ENCODE measurements at regions of chr3 and their contacts with region 1.

Region 1: DNA sequence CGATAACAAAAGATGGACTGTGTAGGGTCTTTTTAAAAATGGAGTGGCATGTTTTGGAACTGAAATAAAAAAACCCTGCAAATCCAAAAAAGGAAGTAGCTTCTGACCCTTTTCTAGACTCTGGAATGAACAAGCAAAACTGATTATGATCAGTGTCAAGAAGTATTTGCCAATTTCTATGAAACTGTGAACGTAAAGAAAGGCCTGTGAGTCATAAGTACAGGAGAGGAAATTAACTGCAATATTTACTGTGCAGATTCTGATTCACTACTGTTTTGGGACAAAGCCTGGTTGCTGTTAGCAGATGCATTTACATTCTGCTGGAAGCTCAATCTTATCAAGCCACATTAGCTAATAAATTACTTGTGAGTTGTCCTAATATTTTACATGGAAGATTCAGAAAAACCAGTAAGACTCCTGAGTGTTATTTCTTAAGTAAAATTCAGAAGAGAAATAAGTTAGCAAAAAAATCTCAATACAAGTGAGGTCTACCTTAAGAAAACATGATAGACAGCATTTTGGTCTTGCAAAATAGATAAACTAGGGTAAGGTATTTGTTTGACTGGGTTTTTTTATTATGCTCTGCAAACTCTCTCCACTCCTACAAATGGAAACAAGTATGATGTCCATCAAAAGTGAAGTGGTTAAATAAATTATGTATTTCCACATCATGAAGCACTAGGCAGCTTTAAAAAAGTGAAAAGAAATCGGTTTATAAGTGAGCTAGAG is 90.2 kb upstream of the LMOD3 start:
- DNase-seq: peak; percentile 94
- H3K4me3 ChIP-seq: no peak overlapping the region
- H3K27ac ChIP-seq: peak overlapping the region; percentile 68
- H3K4me1 ChIP-seq: peaks cover 39% of the 10 kb centered on the region
- H3K27me3 ChIP-seq: no peaks in the 10 kb centered on the region
- CTCF ChIP-seq: no peak
- POLR2A ChIP-seq: no peak

Region 2: DNA sequence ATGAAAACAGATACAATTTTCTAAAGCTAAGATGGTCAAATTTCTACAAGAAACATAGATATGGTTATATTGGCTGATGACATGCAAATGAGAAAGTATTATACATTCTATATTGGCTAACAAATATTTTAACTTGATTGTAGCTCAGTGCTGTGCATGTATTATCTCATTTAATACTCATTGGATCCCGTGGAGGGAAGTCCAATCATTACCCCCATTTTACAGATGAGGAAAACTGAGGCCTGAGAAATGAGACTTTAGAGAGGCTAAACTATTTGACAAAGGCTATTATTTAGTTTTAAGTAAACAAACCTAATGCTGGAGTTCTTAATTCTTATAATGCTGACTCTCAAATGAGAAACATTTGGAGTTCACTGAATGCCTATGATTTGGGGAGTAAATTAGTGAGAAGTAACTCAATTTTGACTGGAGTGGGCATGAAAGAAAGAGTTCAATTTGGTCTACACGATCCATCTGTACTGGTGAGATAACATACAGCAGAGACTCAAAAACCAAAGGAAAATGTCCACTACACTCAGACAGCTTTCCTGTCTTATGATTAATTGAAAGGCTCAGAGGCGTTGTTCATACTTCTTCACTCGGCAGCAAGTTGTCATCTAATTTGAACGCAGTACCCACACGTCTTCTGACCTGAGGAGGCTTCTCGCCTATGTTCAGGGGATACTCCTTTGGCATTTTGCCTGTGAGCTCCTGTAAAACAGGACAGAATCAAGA is 18.0 kb before region 1 on chr3:
- CTCF ChIA-PET with region 1: interaction called, 20 read pairs
- POLR2A ChIA-PET with region 1: interaction called, 3 read pairs
- dilution Hi-C with region 1: no loop called
- intact Hi-C with region 1: loop called (anchors 2 kb)
- DNase-seq: peak; percentile 79
- H3K4me3 ChIP-seq: no peak overlapping the region
- H3K27ac ChIP-seq: peak overlapping the region; percentile 32
- H3K4me1 ChIP-seq: peaks cover 37% of the 10 kb centered on the region
- H3K27me3 ChIP-seq: no peaks in the 10 kb centered on the region
- CTCF ChIP-seq: no peak
- POLR2A ChIP-seq: no peak

Region 3: GRCh38 chr3:69200384-69201068 is 12.0 kb before region 1 on chr3:
- CTCF ChIA-PET with region 1: interaction called, 20 read pairs
- POLR2A ChIA-PET with region 1: interaction called, 3 read pairs
- dilution Hi-C with region 1: no loop called
- intact Hi-C with region 1: loop called (anchors 2 kb)
- DNase-seq: peak; percentile 94
- H3K4me3 ChIP-seq: peak overlapping the region in 2 of 3 experiments; percentile 48 to 88
- H3K27ac ChIP-seq: peak overlapping the region; percentile 88
- H3K4me1 ChIP-seq: peaks cover 56% of the 10 kb centered on the region
- H3K27me3 ChIP-seq: no peaks in the 10 kb centered on the region
- CTCF ChIP-seq: no peak
- POLR2A ChIP-seq: no peak

Region 4: DNA sequence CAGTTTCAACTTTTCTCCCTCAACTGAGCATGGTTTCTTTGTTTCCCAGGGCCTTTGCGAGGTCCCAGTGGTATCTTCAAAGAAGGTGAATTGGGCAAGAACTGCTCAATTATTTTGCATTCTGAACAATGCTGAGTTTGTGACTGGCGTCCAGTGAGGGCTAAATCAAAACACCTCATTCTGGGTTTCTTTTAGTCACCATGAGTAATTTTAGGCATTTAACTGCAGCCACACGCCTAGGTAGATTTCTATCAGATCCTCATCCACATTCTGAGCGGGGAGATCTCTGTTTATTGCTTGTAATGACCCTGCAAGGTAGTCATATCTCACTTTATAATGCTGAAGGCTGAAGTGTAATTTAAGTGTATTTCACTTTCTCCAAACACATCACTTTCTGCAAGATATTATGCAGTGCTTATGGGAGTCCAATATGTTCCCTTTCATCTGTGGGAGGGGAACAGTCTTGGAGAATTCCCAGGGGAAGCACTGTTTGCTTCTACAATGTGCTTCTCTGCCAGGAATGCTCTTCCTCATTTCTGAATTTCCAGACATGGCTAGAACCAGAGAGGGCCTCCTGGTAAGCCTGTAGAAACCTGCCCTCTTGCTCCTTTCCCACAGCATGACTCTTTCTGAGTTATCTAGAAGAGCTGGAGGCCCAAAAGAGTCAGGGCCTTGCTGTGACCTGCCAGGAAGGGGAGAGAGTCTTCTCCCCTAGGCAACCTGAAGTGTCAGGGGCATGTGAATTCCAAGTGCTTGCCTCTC is 81.6 kb after region 1 on chr3:
- CTCF ChIA-PET with region 1: interaction called, 3 read pairs
- POLR2A ChIA-PET with region 1: no interaction called
- dilution Hi-C with region 1: no loop called
- intact Hi-C with region 1: loop called (anchors 1 kb)
- DNase-seq: no peak
- H3K4me3 ChIP-seq: no peak overlapping the region
- H3K27ac ChIP-seq: no peak overlapping the region
- H3K4me1 ChIP-seq: peaks cover 20% of the 10 kb centered on the region
- H3K27me3 ChIP-seq: no peaks in the 10 kb centered on the region
- CTCF ChIP-seq: no peak
- POLR2A ChIP-seq: no peak

Measured in endothelial cell of umbilical vein (primary cell).